ENCODE measurements at regions of chr2 and their contacts with region 1.

Region 1: GRCh38 chr2:8544786-8545694 is 136.8 kb upstream of the ID2 start:
- DNase-seq: peak; percentile 95
- H3K4me3 ChIP-seq: peak overlapping the region; percentile 40
- H3K27ac ChIP-seq: peak overlapping the region; percentile 98
- H3K4me1 ChIP-seq: peaks cover 100% of the 10 kb centered on the region
- CTCF ChIP-seq: peak; percentile 81

Region 2: DNA sequence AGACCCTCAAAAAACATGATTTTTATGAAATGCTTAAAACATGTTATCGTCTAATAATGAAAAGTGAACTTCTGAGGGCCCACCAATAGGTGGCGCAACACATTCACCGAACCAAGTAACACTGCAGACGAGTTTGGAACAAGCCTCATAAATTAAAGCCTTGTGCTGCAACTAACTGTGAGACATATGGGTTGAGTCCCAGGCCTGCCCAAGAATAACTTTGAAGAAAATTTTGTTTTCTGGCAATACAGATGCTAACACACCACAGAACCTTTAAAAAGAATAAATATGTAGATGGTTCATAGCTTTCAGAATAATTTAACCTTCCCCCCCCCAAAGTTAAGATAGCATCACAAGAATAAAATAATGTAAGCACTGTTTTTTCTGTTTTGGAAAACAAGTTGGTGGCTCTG is 1342.0 kb before region 1 on chr2:
- CTCF ChIA-PET with region 1: no interaction called
- POLR2A ChIA-PET with region 1: no interaction called
- intact Hi-C with region 1: loop called (anchors 5 kb)
- DNase-seq: peak; percentile 67
- H3K4me3 ChIP-seq: no peak overlapping the region
- H3K27ac ChIP-seq: no peak overlapping the region
- H3K4me1 ChIP-seq: no peaks in the 10 kb centered on the region
- CTCF ChIP-seq: peak; percentile 99

Region 3: GRCh38 chr2:7427293-7428060 is 1117.6 kb before region 1 on chr2:
- CTCF ChIA-PET with region 1: no interaction called
- POLR2A ChIA-PET with region 1: no interaction called
- intact Hi-C with region 1: loop called (anchors 5 kb)
- DNase-seq: peak; percentile 92
- H3K4me3 ChIP-seq: no peak overlapping the region
- H3K27ac ChIP-seq: no peak overlapping the region
- H3K4me1 ChIP-seq: peaks cover 48% of the 10 kb centered on the region
- CTCF ChIP-seq: peak; percentile 91

Region 4: DNA sequence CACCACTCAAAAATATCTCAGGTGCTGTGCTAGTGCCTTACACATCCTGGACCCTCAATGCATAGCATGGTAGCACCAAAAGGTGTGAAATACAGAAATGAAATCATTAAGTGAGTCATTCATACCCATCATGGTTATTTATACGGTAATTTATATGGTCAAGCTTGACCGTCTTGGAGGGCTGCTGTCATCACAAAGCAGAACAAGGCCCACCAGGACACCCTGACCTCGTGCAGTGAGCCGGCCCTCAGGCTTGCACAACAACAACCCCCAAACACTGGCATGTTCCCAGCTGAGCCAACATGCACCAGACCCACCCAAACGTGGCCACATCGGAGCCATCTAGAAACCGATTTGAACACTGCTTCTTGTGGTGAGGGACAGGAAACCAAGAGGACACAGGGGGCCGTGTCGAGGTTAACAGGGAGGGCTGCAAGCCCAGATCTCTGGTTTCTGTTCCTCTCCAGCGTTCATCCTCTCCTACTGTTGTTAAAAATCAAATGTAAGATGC is 241.7 kb before region 1 on chr2:
- CTCF ChIA-PET with region 1: no interaction called
- POLR2A ChIA-PET with region 1: interaction called, 4 read pairs
- intact Hi-C with region 1: loop called (anchors 2 kb)
- DNase-seq: peak; percentile 96
- H3K4me3 ChIP-seq: peak overlapping the region; percentile 36
- H3K27ac ChIP-seq: peak overlapping the region; percentile 76
- H3K4me1 ChIP-seq: peaks cover 71% of the 10 kb centered on the region
- CTCF ChIP-seq: peak; percentile 70

Region 5: GRCh38 chr2:8514796-8515758 is 30.0 kb before region 1 on chr2:
- CTCF ChIA-PET with region 1: no interaction called
- POLR2A ChIA-PET with region 1: interaction called, 3 read pairs
- intact Hi-C with region 1: loop called (anchors 1 kb)
- DNase-seq: peak; percentile 88
- H3K4me3 ChIP-seq: peak overlapping the region; percentile 47
- H3K27ac ChIP-seq: peak overlapping the region; percentile 95
- H3K4me1 ChIP-seq: peaks cover 68% of the 10 kb centered on the region
- CTCF ChIP-seq: no peak

Region 6: DNA sequence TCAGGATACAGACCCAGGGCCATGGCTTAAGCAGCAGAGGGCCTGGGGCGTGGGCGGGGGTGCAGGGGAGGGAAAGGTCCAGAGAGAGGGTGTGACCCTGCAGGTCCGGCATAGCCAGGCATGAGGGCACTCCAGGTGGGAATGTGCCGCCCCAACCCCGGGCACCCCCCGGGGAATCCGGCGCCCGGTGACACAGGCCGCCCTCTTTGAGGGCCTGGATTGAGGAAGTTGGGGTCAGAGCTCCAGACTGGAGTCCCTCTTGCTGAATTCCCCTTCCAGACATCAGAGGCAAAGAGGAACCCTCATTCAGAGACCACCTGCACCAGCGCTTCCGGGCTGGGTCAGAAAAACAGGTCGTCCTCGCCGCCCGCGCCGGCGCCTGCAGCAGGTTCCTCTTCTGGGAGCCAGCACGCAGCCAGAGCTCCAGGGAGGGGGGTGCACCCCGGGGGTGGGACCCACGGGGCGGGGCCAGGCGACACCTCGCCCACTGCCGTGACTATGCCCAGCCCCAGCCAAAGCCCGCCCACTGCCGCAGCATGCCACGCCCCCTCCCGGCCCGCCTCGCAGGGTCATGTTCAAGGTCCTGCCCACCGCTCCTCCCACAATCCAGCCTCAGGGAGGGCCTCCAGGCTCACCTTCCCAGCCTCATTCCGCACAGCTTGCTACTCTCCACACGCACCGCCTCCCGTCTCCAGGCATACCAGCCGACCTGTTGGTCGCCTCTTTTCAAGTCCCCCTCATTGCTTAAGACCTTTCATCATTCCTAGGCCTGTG is 38.5 kb after region 1 on chr2:
- CTCF ChIA-PET with region 1: interaction called, 5 read pairs
- POLR2A ChIA-PET with region 1: interaction called, 59 read pairs
- intact Hi-C with region 1: loop called (anchors 2 kb)
- DNase-seq: peak; percentile 99
- H3K4me3 ChIP-seq: peak overlapping the region; percentile 61
- H3K27ac ChIP-seq: peak overlapping the region; percentile 98
- H3K4me1 ChIP-seq: peaks cover 97% of the 10 kb centered on the region
- CTCF ChIP-seq: no peak